WTC11 (cell line): ENCODE measurements at regions of chr14 and their contacts with region 1.

Region 1: DNA sequence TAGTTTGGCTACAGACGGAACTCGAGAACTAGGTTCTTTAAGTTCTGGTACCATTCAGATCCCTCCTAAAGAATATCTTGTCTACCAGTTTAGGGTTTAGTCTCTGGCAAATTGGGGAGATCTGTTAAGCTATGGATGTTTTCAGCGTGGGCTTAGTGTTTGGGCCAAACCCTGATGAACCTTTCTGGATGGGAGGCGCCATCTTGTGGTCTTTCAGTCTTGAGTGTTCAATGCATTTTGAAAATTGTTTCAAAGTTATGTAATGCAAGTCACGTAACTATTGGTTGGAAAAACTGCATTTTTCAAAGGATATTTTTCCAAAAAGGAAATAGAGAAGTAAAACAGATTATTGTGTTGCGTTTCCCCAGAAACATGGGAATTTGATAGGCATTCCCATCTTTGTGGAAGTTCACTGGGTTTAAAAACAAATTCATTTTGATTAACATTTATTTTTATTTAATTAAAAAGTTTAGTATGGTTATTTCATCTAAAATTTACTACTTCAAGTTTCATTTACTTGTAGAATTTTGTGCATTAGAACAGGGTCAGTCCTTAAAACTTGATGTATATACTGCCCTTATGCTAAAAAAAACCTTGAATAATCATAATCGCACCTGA is 169.0 kb downstream of the PRIMA1 start:
- DNase-seq: peak; percentile 44
- ATAC-seq: peak; percentile 47; the same call in 1 of the 2 replicates
- H3K4me3 Mint-ChIP-seq: no peak overlapping the region
- H3K27ac Mint-ChIP-seq: no peak overlapping the region
- H3K4me1 Mint-ChIP-seq: peaks cover 9% of the 10 kb centered on the region; the same call in 1 of the 2 replicates
- H3K27me3 Mint-ChIP-seq: no peaks in the 10 kb centered on the region
- CTCF ChIP-seq: no peak

Region 2: GRCh38 chr14:93510066-93510465 is 109.2 kb before region 1 on chr14:
- CTCF ChIA-PET with region 1: no interaction called
- POLR2A ChIA-PET with region 1: no interaction called
- DNase-seq: no peak
- ATAC-seq: peak; percentile 86
- H3K4me3 Mint-ChIP-seq: no peak overlapping the region
- H3K27ac Mint-ChIP-seq: peak overlapping the region; percentile 40; the same call in 1 of the 2 replicates
- H3K4me1 Mint-ChIP-seq: peaks cover 10% of the 10 kb centered on the region
- H3K27me3 Mint-ChIP-seq: no peaks in the 10 kb centered on the region; the same call in 1 of the 2 replicates
- CTCF ChIP-seq: no peak

Region 3: GRCh38 chr14:93548102-93548843 is 71.0 kb before region 1 on chr14:
- CTCF ChIA-PET with region 1: no interaction called
- POLR2A ChIA-PET with region 1: no interaction called
- DNase-seq: no peak
- ATAC-seq: no peak
- H3K4me3 Mint-ChIP-seq: no peak overlapping the region
- H3K27ac Mint-ChIP-seq: no peak overlapping the region
- H3K4me1 Mint-ChIP-seq: peaks cover 3% of the 10 kb centered on the region; the same call in 1 of the 2 replicates
- H3K27me3 Mint-ChIP-seq: no peaks in the 10 kb centered on the region
- CTCF ChIP-seq: no peak

Region 4: GRCh38 chr14:93606091-93606490 is 13.2 kb before region 1 on chr14:
- CTCF ChIA-PET with region 1: interaction called, 11 read pairs
- POLR2A ChIA-PET with region 1: no interaction called
- DNase-seq: no peak
- ATAC-seq: no peak
- H3K4me3 Mint-ChIP-seq: no peak overlapping the region
- H3K27ac Mint-ChIP-seq: no peak overlapping the region
- H3K4me1 Mint-ChIP-seq: no peaks in the 10 kb centered on the region
- H3K27me3 Mint-ChIP-seq: no peaks in the 10 kb centered on the region
- CTCF ChIP-seq: no peak